Aorta (tissue), 5 donors: ENCODE measurements at regions of chr19 and their contacts with region 1.

Region 1: GRCh38 chr19:11587302-11587974 is 9.8 kb upstream of the ZNF627 start:
- DNase-seq: peak; percentile 84 to 90
- ATAC-seq: peak; percentile 94
- H3K4me3 ChIP-seq: no peak overlapping the region
- H3K27ac ChIP-seq: no peak overlapping the region
- H3K4me1 ChIP-seq: no peaks in the 10 kb centered on the region
- H3K27me3 ChIP-seq: no peaks in the 10 kb centered on the region

Region 2: DNA sequence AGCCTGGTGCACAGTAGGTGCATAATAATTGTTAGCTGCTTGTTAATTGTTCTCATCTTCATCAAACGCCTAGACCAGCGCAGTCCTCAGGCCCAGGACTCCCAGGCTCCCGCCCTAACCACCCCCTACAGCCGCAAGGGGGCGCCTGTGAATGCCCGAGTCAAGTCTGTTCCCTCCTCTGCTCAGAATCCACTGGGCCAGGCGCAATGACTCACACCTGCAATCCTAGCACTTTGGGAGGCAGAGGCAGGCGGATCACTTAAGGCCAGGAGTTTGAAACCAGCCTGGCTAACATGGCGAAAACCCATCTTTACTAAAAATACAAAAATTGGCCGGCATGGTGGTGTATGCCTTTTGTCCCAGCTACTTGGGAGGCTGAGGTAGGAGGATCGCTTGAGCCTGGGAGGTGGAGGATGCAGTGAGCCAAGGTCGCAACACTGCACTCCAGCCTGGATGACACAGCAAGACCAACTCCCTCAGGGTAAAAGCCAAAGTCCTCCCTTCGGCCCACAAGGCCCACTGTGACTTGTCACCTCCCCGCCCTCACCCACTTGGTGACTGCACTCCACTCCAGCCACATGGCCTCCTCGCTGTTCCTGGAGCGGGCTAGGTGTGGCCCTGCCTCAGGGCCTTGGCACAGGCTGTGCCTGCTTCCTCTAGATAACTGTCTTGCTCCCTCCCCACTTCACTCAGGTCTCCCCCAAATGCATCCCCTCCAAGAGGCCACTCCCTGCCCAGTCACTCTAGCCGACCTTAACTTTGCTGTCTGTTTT is 90.9 kb before region 1 on chr19:
- intact Hi-C with region 1: loop called (anchors 1 to 5 kb)
- DNase-seq: peak; percentile 82 to 91
- ATAC-seq: peak; percentile 69
- H3K4me3 ChIP-seq: no peak overlapping the region
- H3K27ac ChIP-seq: no peak overlapping the region
- H3K4me1 ChIP-seq: no peaks in the 10 kb centered on the region
- H3K27me3 ChIP-seq: no peaks in the 10 kb centered on the region

Region 3: DNA sequence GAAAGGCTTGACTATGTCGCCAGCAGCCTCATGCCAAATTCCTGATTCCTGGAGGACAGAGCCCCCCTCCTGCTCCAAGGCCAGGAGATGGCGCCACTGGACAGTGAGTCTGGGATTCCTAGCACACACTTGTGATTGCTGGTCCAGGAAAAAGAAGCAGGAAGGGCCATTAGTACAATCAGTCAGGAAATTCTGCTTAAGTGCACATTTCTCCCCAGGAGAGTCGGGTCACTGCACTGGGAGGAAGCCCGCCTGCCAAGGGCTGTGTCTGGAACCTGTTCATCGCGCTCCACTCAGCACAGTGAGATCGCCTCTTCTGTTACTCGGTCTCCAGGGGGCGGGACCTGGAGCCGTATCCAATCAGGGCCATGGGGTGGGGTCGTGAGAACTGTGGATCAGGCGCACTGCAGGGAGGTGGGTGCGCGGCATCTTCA is 86.2 kb after region 1 on chr19:
- intact Hi-C with region 1: no loop called
- DNase-seq: peak; percentile 74 to 89
- ATAC-seq: peak; percentile 84
- H3K4me3 ChIP-seq: peak overlapping the region in 1 of 2 donors; percentile 22
- H3K27ac ChIP-seq: no peak overlapping the region
- H3K4me1 ChIP-seq: no peaks in the 10 kb centered on the region
- H3K27me3 ChIP-seq: no peaks in the 10 kb centered on the region